AG04450 (cell line): ENCODE measurements at regions of chr11 and their contacts with region 1.

Region 1: DNA sequence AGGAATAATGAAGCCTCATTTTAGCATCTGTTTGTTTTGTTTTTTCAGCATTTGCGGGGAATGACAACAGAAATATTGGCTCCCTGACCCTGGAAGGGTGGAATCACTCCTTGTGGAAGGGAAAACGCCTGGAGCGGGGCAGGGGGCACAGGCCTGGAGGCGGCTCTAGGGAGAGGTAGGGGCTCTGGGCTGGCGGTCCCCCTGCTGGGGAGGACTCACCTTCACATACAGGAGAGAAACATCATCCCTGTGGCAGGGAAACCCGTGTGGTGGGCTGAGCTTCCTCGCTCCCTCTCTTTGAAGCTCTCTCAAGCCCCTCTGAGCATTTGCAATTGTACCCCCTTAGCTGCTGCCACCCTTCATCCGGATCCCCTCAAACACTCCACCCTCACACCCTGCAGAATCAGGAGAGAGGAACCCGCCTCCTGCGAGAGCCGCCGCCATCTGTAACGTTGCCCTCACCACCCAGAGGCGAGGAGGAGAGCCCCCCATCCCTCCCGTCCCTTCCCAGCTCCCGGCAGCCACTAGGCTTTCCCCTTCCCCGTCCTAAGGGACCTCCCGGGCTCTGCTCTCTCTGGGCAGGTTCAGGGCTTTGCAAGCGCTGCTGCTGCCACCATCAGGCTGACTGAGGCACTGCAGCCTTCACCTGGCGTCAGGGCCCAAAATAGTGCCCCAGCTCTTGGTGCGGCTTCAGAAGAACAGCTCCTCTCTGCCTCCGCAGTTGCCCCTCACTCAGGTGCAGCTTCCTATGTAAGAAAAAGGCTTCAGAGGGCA is 10.4 kb downstream of the KIRREL3 start:
- DNase-seq: peak; percentile 46
- H3K4me3 ChIP-seq: peak overlapping the region; percentile 49
- H3K27ac ChIP-seq: peak overlapping the region; percentile 86
- H3K27me3 ChIP-seq: no peaks in the 10 kb centered on the region
- CTCF ChIP-seq: peak; percentile 98

Region 2: DNA sequence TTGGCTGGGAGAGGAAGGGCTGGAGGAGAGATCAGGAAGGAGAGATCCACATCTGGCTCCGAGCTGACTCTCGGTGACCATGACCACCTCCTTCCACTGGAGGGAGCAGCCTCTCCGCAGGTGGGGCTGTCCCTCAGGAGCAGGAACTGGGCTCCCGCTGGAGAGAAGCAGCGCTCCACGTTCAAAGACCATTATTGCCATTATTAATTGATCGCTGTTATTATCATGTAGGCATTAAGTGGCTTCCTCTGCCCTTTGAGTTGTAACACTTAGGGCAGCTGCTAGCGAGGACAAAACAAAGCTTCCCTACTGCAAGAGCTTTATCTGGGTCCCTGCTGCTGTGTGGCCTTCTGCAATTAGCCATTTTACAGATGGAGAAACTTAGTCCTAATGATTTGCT is 382.8 kb before region 1 on chr11:
- CTCF ChIA-PET with region 1: interaction called, 88 read pairs
- POLR2A ChIA-PET with region 1: no interaction called
- DNase-seq: peak; percentile 42
- H3K4me3 ChIP-seq: no peak overlapping the region
- H3K27ac ChIP-seq: no peak overlapping the region
- H3K27me3 ChIP-seq: no peaks in the 10 kb centered on the region
- CTCF ChIP-seq: peak; percentile 96

Region 3: DNA sequence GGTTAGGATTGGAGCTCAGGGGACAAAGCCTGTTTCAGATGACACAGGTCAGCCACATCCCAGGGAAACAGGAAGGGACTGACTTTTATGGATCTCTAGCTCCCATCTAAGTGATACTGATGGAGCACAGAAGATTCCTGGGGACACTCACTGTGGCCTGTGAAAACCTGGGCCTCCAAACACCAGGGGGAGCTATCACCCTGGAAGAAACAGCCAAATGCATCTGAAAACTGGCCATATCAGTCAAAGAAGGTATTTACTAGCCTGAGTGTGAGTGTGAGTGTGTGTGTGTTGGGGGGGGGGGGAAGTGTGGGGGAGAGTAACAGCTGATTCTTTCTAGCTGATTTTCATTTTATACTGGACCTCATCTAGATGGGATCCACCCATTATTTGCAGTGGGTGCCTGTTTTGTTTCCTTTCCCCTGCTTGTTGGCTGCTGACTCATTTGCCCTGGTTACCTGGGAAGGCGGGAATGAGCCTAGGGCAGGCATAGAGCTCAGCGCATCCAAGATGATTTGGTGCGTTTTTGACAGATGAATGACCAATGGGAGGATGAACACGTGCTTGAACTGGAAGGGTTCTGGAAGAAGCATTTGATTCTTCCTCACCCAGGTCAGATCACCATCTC is 273.6 kb before region 1 on chr11:
- CTCF ChIA-PET with region 1: interaction called, 184 read pairs
- POLR2A ChIA-PET with region 1: no interaction called
- DNase-seq: no peak
- H3K4me3 ChIP-seq: no peak overlapping the region
- H3K27ac ChIP-seq: no peak overlapping the region
- H3K27me3 ChIP-seq: no peaks in the 10 kb centered on the region
- CTCF ChIP-seq: peak; percentile 70

Region 4: DNA sequence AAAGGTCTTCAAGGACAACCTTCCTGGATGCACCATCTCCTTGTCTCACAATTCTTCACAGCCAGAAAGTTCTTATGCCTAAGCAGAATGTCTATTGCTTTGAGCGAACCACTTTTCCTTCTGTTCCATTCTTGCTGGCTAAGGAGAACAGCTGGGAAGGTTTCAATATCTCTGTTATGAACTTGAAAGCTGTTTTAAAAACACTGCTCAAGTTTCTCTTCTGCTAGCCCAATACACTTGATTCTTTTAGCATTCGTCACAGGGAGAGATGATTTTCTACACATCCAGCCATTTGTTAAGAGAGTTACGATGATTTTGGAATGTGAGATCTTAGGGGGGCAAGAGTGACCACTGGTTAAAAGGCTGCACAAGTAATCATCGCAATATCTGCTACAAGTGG is 238.9 kb before region 1 on chr11:
- CTCF ChIA-PET with region 1: interaction called, 10 read pairs
- POLR2A ChIA-PET with region 1: no interaction called
- DNase-seq: peak; percentile 76
- H3K4me3 ChIP-seq: peak overlapping the region; percentile 30; the same call in 1 of the 2 replicates
- H3K27ac ChIP-seq: no peak overlapping the region
- H3K27me3 ChIP-seq: no peaks in the 10 kb centered on the region
- CTCF ChIP-seq: no peak

Region 5: GRCh38 chr11:126969865-126970479 is 20.2 kb before region 1 on chr11:
- CTCF ChIA-PET with region 1: interaction called, 10 read pairs
- POLR2A ChIA-PET with region 1: no interaction called
- DNase-seq: no peak
- H3K4me3 ChIP-seq: no peak overlapping the region
- H3K27ac ChIP-seq: peak overlapping the region; percentile 34
- H3K27me3 ChIP-seq: no peaks in the 10 kb centered on the region
- CTCF ChIP-seq: peak; percentile 92

Region 6: GRCh38 chr11:127443297-127443696 is 453.2 kb after region 1 on chr11:
- CTCF ChIA-PET with region 1: no interaction called
- POLR2A ChIA-PET with region 1: no interaction called
- DNase-seq: no peak
- H3K4me3 ChIP-seq: no peak overlapping the region
- H3K27ac ChIP-seq: no peak overlapping the region
- H3K27me3 ChIP-seq: no peaks in the 10 kb centered on the region
- CTCF ChIP-seq: no peak

Region 7: GRCh38 chr11:127470306-127470884 is 480.3 kb after region 1 on chr11:
- CTCF ChIA-PET with region 1: no interaction called
- POLR2A ChIA-PET with region 1: no interaction called
- DNase-seq: no peak
- H3K4me3 ChIP-seq: no peak overlapping the region
- H3K27ac ChIP-seq: no peak overlapping the region
- H3K27me3 ChIP-seq: no peaks in the 10 kb centered on the region
- CTCF ChIP-seq: peak; percentile 43